ENCODE measurements at regions of chr9 and their contacts with region 1.

Region 1: GRCh38 chr9:129413537-129414376 is 207.1 kb downstream of the C9orf50 start:
- DNase-seq: peak; percentile 99 to 100 (median 99)
- ATAC-seq: peak; percentile 57 to 87 (median 86)
- H3K4me3 ChIP-seq: peak overlapping the region; percentile 28 to 71 (median 58)
- H3K27ac ChIP-seq: peak overlapping the region; percentile 94 to 100 (median 100)
- H3K4me1 ChIP-seq: peaks cover 4 to 56% (median 32%) of the 10 kb centered on the region in 12 donors
- H3K27me3 ChIP-seq: no peaks in the 10 kb centered on the region
- CTCF ChIP-seq: peak in 1 of 12 donors; percentile 13
- POLR2A ChIP-seq: peak; percentile 41 to 85

Region 2: GRCh38 chr9:129258124-129258822 is 155.5 kb before region 1 on chr9:
- intact Hi-C with region 1: loop called in 1 of 10 experiments (anchors 5 kb)
- DNase-seq: peak; percentile 93 to 97 (median 95)
- ATAC-seq: peak; percentile 66 to 87 (median 82)
- H3K4me3 ChIP-seq: peak overlapping the region in 9 of 12 donors; percentile 17 to 41 (median 33)
- H3K27ac ChIP-seq: peak overlapping the region in 6 of 12 donors; percentile 4 to 62 (median 20)
- H3K4me1 ChIP-seq: peaks cover 6 to 45% (median 28%) of the 10 kb centered on the region in 12 donors
- H3K27me3 ChIP-seq: peaks cover 0 to 16% (median 0%) of the 10 kb centered on the region in 9 donors
- CTCF ChIP-seq: no peak
- POLR2A ChIP-seq: no peak

Region 3: GRCh38 chr9:129383561-129384416 is 30.0 kb before region 1 on chr9:
- intact Hi-C with region 1: loop called in 1 of 10 experiments (anchors 2 kb)
- DNase-seq: peak; percentile 85 to 92 (median 87)
- ATAC-seq: peak; percentile 68 to 92 (median 89)
- H3K4me3 ChIP-seq: peak overlapping the region; percentile 15 to 78 (median 64)
- H3K27ac ChIP-seq: peak overlapping the region; percentile 90 to 98 (median 96)
- H3K4me1 ChIP-seq: peaks cover 0 to 25% (median 15%) of the 10 kb centered on the region in 12 donors
- H3K27me3 ChIP-seq: no peaks in the 10 kb centered on the region
- CTCF ChIP-seq: peak in 5 of 12 donors; percentile 26 to 47 (median 35)
- POLR2A ChIP-seq: peak in 1 of 2 donors; percentile 41

Region 4: GRCh38 chr9:129436751-129437625 is 23.2 kb after region 1 on chr9:
- intact Hi-C with region 1: no loop called
- DNase-seq: peak; percentile 67 to 86 (median 78)
- ATAC-seq: peak; percentile 45 to 88 (median 82)
- H3K4me3 ChIP-seq: peak overlapping the region; percentile 33 to 65 (median 54)
- H3K27ac ChIP-seq: peak overlapping the region; percentile 20 to 86 (median 72)
- H3K4me1 ChIP-seq: peaks cover 0 to 27% (median 14%) of the 10 kb centered on the region in 12 donors
- H3K27me3 ChIP-seq: peaks cover 0 to 27% (median 0%) of the 10 kb centered on the region in 9 donors
- CTCF ChIP-seq: no peak
- POLR2A ChIP-seq: no peak

Region 5: GRCh38 chr9:129476821-129477611 is 63.3 kb after region 1 on chr9:
- intact Hi-C with region 1: loop called in 7 of 10 experiments (anchors 2 to 10 kb)
- DNase-seq: no peak
- ATAC-seq: no peak
- H3K4me3 ChIP-seq: no peak overlapping the region
- H3K27ac ChIP-seq: no peak overlapping the region
- H3K4me1 ChIP-seq: peaks cover 0 to 50% (median 36%) of the 10 kb centered on the region in 12 donors
- H3K27me3 ChIP-seq: no peaks in the 10 kb centered on the region
- CTCF ChIP-seq: no peak
- POLR2A ChIP-seq: no peak

Region 6: GRCh38 chr9:129495534-129496325 is 82.0 kb after region 1 on chr9:
- intact Hi-C with region 1: loop called in 3 of 10 experiments (anchors 1 to 5 kb)
- DNase-seq: peak; percentile 96 to 98 (median 97)
- ATAC-seq: peak; percentile 84 to 89 (median 86)
- H3K4me3 ChIP-seq: peak overlapping the region; percentile 30 to 72 (median 62)
- H3K27ac ChIP-seq: peak overlapping the region; percentile 93 to 100 (median 98)
- H3K4me1 ChIP-seq: peaks cover 8 to 92% (median 65%) of the 10 kb centered on the region in 12 donors
- H3K27me3 ChIP-seq: no peaks in the 10 kb centered on the region
- CTCF ChIP-seq: no peak
- POLR2A ChIP-seq: peak in 1 of 2 donors; percentile 14

Region 7: GRCh38 chr9:129591916-129592315 is 178.2 kb after region 1 on chr9:
- intact Hi-C with region 1: no loop called
- DNase-seq: no peak
- ATAC-seq: no peak
- H3K4me3 ChIP-seq: no peak overlapping the region
- H3K27ac ChIP-seq: no peak overlapping the region
- H3K4me1 ChIP-seq: peaks cover 0 to 22% (median 6%) of the 10 kb centered on the region in 12 donors
- H3K27me3 ChIP-seq: peaks cover 0 to 2% (median 0%) of the 10 kb centered on the region in 9 donors
- CTCF ChIP-seq: no peak
- POLR2A ChIP-seq: no peak

Measured in heart left ventricle (tissue), 16 donors.